Common myeloid progenitor, CD34-positive (primary cell): ENCODE measurements at regions of chr7 and their contacts with region 1.

Region 1: DNA sequence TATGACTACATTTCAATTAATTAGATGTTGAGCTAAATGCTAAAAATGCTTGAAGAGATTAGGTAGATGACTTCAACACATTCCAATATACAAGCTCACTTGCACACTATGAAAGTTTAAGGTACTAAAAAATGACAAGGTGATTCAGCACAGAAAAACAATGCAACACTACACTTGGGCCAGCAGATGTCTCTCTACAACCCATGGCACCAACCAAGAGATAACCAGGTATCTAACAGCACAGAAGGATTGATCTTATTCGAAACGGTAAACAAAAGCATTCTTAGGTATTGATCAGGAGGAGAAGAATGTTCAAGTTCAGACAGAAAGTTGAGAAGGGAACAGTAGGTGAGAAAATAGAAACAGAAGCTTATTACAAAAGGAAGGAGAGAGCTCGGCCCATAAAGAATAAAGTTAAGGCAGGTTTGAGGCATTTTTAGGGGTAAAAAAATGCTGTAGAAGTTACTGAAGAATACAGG is 248.2 kb upstream of the KLF14 start:
- DNase-seq: peak; percentile 67 to 73 (median 72)
- H3K4me3 ChIP-seq: peak overlapping the region in 1 of 7 experiments; percentile 42
- H3K27ac ChIP-seq: peak overlapping the region; percentile 30 to 56
- H3K4me1 ChIP-seq: peaks cover 18 to 43% (median 30%) of the 10 kb centered on the region in 4 experiments
- H3K27me3 ChIP-seq: no peaks in the 10 kb centered on the region

Region 2: DNA sequence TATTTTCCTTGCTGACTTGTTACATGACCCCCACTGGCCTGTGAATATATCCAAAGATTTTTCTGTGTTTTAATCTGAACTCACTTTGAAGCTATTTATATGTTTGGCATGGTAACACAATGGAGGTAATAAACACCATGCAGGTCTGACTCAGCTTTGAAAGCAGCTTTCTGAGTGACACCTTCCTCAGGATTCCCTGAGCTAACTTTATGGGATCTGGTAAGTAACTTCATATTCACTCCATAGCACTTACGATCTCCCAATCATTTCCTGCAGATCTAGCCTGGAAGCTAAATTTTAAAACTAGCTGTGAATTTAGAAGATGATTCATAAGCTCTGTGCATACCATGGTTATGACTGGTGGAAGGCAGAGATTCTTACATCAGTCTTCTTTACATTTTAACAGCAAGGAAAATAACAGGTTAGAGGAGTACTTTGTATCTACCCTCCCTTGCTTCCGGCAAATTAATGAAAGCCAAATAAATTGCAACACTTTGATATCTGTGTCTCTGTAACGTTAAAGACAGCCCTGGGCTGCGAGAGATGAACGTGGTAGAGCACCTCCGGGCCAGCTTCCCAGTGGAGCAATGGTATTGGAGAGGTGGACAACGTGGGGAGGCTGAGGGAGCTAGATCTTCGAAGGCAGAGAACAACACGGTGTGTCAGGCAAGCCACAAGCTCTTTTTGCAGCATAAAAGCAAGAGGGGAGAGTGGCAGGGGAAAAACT is 78.0 kb before region 1 on chr7:
- CTCF ChIA-PET with region 1: interaction called, 58 read pairs
- POLR2A ChIA-PET with region 1: no interaction called
- DNase-seq: peak in 1 of 3 donors; percentile 38
- H3K4me3 ChIP-seq: no peak overlapping the region
- H3K27ac ChIP-seq: no peak overlapping the region
- H3K4me1 ChIP-seq: peaks cover 0 to 16% (median 3%) of the 10 kb centered on the region in 4 experiments
- H3K27me3 ChIP-seq: no peaks in the 10 kb centered on the region

Region 3: DNA sequence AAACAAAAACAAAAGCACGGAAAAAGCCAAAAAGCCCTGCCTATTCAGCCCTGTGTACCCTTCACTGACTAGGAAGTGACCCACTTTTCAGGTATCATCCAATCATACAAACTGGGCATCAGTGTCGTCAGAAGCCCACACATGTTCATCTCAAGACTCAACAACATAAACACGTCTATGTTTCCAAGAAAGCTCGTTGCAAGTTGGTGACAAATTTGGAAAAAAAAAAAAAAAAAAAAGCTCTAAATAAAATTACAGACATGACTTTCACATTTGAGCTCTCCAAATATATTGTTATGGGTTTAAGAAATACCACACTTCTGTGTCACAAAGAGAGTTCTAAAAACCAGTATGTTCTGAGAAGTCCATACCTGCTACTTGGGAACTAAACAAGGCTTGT is 43.5 kb before region 1 on chr7:
- CTCF ChIA-PET with region 1: no interaction called
- POLR2A ChIA-PET with region 1: no interaction called
- DNase-seq: no peak
- H3K4me3 ChIP-seq: no peak overlapping the region
- H3K27ac ChIP-seq: no peak overlapping the region
- H3K4me1 ChIP-seq: peaks cover 4 to 19% (median 10%) of the 10 kb centered on the region in 4 experiments
- H3K27me3 ChIP-seq: no peaks in the 10 kb centered on the region

Region 4: GRCh38 chr7:130961128-130961601 is 21.0 kb before region 1 on chr7:
- CTCF ChIA-PET with region 1: interaction called, 19 read pairs
- POLR2A ChIA-PET with region 1: no interaction called
- DNase-seq: peak; percentile 30 to 88 (median 83)
- H3K4me3 ChIP-seq: peak overlapping the region in 4 of 7 experiments; percentile 19 to 68 (median 62)
- H3K27ac ChIP-seq: peak overlapping the region; percentile 36 to 70
- H3K4me1 ChIP-seq: peaks cover 20 to 71% (median 38%) of the 10 kb centered on the region in 4 experiments
- H3K27me3 ChIP-seq: no peaks in the 10 kb centered on the region

Region 5: GRCh38 chr7:130996841-130997231 is 14.6 kb after region 1 on chr7:
- CTCF ChIA-PET with region 1: interaction called, 19 read pairs
- POLR2A ChIA-PET with region 1: interaction called, 3 read pairs
- DNase-seq: peak in 2 of 3 donors; percentile 57 to 66
- H3K4me3 ChIP-seq: peak overlapping the region in 2 of 7 experiments; percentile 28 to 41
- H3K27ac ChIP-seq: peak overlapping the region; percentile 42 to 69
- H3K4me1 ChIP-seq: peaks cover 15 to 60% (median 40%) of the 10 kb centered on the region in 4 experiments
- H3K27me3 ChIP-seq: no peaks in the 10 kb centered on the region

Region 6: GRCh38 chr7:131040467-131040932 is 58.3 kb after region 1 on chr7:
- CTCF ChIA-PET with region 1: interaction called, 22 read pairs
- POLR2A ChIA-PET with region 1: interaction called, 4 read pairs
- DNase-seq: peak; percentile 64 to 84 (median 78)
- H3K4me3 ChIP-seq: peak overlapping the region in 2 of 7 experiments; percentile 25 to 68
- H3K27ac ChIP-seq: no peak overlapping the region
- H3K4me1 ChIP-seq: peaks cover 4 to 27% (median 14%) of the 10 kb centered on the region in 4 experiments
- H3K27me3 ChIP-seq: no peaks in the 10 kb centered on the region